ENCODE measurements at regions of chr1 and their contacts with region 1.

Region 1: DNA sequence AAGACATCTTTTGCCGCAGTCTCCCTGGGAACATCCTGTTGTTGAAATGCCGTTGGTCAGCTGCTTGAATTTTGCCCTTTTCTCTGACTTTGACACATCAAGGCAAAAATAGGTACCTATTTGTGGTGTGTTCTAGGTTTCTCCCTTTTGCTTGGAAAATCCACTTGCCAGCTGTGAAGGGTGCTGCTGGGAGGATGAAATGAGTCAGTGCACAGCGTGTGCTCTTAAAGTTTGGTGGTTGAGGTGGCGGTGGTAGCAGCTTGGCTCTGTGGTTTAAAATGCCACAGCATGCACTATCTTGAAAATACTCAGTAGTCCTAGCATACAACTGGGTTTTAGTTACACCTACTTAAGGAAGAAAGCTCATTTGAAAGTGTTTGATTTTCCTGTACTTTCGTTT is 183.8 kb downstream of the DHRS3 start:
- DNase-seq: peak; percentile 29 to 74 (median 41)
- H3K4me3 ChIP-seq: peak overlapping the region in 1 of 2 donors; percentile 9
- H3K4me3 Mint-ChIP-seq: peak overlapping the region in 7 of 8 donors; percentile 42 to 83 (median 78)
- H3K27ac ChIP-seq: peak overlapping the region; percentile 4
- H3K27ac Mint-ChIP-seq: peak overlapping the region; percentile 83 to 94 (median 90)
- H3K4me1 ChIP-seq: peaks cover 59% of the 10 kb centered on the region
- H3K4me1 Mint-ChIP-seq: peaks cover 47 to 78% (median 57%) of the 10 kb centered on the region in 4 donors
- H3K27me3 ChIP-seq: no peaks in the 10 kb centered on the region
- H3K27me3 Mint-ChIP-seq: no peaks in the 10 kb centered on the region

Region 2: GRCh38 chr1:12275369-12275768 is 158.8 kb before region 1 on chr1:
- CTCF ChIA-PET with region 1: no interaction called
- POLR2A ChIA-PET with region 1: no interaction called
- intact Hi-C with region 1: no loop called
- DNase-seq: peak in 4 of 5 donors; percentile 7 to 19 (median 14)
- H3K4me3 ChIP-seq: no peak overlapping the region
- H3K4me3 Mint-ChIP-seq: no peak overlapping the region
- H3K27ac ChIP-seq: no peak overlapping the region
- H3K27ac Mint-ChIP-seq: peak overlapping the region in 1 of 7 donors; percentile 82
- H3K4me1 ChIP-seq: no peaks in the 10 kb centered on the region
- H3K4me1 Mint-ChIP-seq: peaks cover 5 to 9% (median 8%) of the 10 kb centered on the region in 4 donors
- H3K27me3 ChIP-seq: no peaks in the 10 kb centered on the region
- H3K27me3 Mint-ChIP-seq: no peaks in the 10 kb centered on the region

Region 3: DNA sequence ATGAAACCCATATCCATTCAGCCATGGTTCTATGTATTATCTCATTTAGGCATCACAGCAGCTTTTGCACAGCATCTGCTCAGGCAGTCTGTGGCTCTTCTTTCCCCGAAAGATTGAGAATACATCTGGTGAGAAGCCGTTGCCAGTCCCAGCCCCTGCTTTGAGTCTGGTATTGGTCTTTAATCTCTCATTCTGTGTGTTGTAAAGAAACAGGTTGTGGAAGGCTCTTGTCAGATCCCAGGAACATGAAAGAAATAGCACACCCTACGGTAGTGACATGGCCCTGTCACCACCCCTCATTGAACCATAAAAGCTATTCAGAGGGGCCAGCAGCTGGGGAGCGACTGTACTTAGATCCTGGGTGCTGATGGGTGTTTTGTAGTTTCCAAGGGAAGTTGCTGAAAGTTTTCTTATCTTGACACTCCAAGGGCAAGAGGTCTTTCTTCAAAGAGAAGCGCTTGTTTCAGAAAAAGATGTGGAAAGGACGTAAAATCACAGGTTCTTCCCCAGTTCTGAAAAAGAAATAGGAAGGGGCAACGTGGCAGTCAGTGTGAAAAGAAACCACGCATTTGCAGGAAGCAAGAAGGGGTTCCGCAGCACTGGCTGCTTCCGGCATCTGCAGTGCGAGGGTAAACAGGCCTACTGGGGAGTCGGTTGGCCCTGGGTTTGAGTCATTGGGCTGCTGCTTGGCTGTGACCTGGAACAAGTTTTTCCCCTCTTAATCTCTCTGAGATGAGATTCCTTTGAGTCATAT is 38.8 kb after region 1 on chr1:
- CTCF ChIA-PET with region 1: interaction called, 8 read pairs
- POLR2A ChIA-PET with region 1: interaction called, 66 read pairs
- intact Hi-C with region 1: loop called (anchors 5 kb)
- DNase-seq: peak; percentile 30 to 71 (median 45)
- H3K4me3 ChIP-seq: peak overlapping the region in 1 of 2 donors; percentile 23
- H3K4me3 Mint-ChIP-seq: peak overlapping the region; percentile 72 to 85 (median 84)
- H3K27ac ChIP-seq: peak overlapping the region; percentile 51
- H3K27ac Mint-ChIP-seq: peak overlapping the region; percentile 93 to 98 (median 95)
- H3K4me1 ChIP-seq: peaks cover 79% of the 10 kb centered on the region
- H3K4me1 Mint-ChIP-seq: peaks cover 54 to 91% (median 70%) of the 10 kb centered on the region in 4 donors
- H3K27me3 ChIP-seq: no peaks in the 10 kb centered on the region
- H3K27me3 Mint-ChIP-seq: no peaks in the 10 kb centered on the region

Region 4: DNA sequence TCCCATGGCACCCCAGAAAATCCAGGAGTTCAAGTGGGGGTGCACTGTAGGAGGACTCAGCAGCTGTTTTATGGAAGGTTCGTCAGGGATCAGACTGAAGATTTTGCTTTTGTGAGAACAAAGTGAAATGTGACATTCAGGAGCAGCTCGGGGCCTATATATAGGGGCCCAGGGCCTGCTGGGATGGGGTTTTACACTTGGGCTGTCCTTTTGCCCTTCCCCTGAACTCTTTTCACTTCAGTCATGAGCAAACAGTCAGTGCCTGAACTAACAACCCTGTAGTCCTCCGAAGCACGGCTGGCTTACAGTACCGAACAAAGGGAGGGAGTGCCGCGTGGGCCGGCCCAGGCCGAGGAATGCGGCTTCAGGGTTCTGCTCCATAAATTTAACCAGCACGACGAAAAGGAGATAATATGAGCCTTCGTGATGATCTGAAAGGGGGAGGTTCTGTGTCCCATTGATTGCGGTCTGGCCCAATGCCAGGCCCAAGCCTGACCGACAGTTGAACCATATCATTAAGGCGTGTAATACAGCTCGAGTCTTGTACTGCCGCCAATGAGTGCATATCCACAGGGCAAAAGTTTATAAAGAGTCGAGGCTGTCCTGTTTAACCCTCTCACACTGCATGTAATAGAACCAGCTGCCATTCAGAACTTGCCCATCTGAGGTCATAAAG is 43.9 kb after region 1 on chr1:
- CTCF ChIA-PET with region 1: interaction called, 8 read pairs
- POLR2A ChIA-PET with region 1: interaction called, 66 read pairs
- intact Hi-C with region 1: loop called (anchors 5 kb)
- DNase-seq: peak in 3 of 5 donors; percentile 9 to 53 (median 22)
- H3K4me3 ChIP-seq: peak overlapping the region in 1 of 2 donors; percentile 9
- H3K4me3 Mint-ChIP-seq: peak overlapping the region in 7 of 8 donors; percentile 59 to 84 (median 78)
- H3K27ac ChIP-seq: peak overlapping the region; percentile 38
- H3K27ac Mint-ChIP-seq: peak overlapping the region; percentile 89 to 94 (median 92)
- H3K4me1 ChIP-seq: peaks cover 93% of the 10 kb centered on the region
- H3K4me1 Mint-ChIP-seq: peaks cover 69 to 92% (median 81%) of the 10 kb centered on the region in 4 donors
- H3K27me3 ChIP-seq: no peaks in the 10 kb centered on the region
- H3K27me3 Mint-ChIP-seq: no peaks in the 10 kb centered on the region

Region 5: GRCh38 chr1:12629521-12629956 is 195.4 kb after region 1 on chr1:
- CTCF ChIA-PET with region 1: no interaction called
- POLR2A ChIA-PET with region 1: no interaction called
- intact Hi-C with region 1: no loop called
- DNase-seq: no peak
- H3K4me3 ChIP-seq: no peak overlapping the region
- H3K4me3 Mint-ChIP-seq: no peak overlapping the region
- H3K27ac ChIP-seq: no peak overlapping the region
- H3K27ac Mint-ChIP-seq: no peak overlapping the region
- H3K4me1 ChIP-seq: peaks cover 5% of the 10 kb centered on the region
- H3K4me1 Mint-ChIP-seq: peaks cover 2 to 14% (median 10%) of the 10 kb centered on the region in 4 donors
- H3K27me3 ChIP-seq: no peaks in the 10 kb centered on the region
- H3K27me3 Mint-ChIP-seq: peaks cover 0 to 4% of the 10 kb centered on the region in 2 donors

Measured in CD4-positive, alpha-beta memory T cell (primary cell).